T-cell (primary cell): ENCODE measurements at regions of chr6 and their contacts with region 1.

Region 1: GRCh38 chr6:35354361-35355135 is 12.2 kb downstream of the PPARD start:
- DNase-seq: no peak
- ATAC-seq: no peak
- H3K4me3 ChIP-seq: no peak overlapping the region
- H3K4me3 Mint-ChIP-seq: no peak overlapping the region
- H3K27ac ChIP-seq: no peak overlapping the region
- H3K27ac Mint-ChIP-seq: peak overlapping the region in 1 of 2 donors; percentile 34
- H3K4me1 ChIP-seq: peaks cover 0 to 12% of the 10 kb centered on the region in 2 experiments
- H3K4me1 Mint-ChIP-seq: peaks cover 62 to 70% (median 65%) of the 10 kb centered on the region in 3 donors
- H3K27me3 ChIP-seq: no peaks in the 10 kb centered on the region
- H3K27me3 Mint-ChIP-seq: no peaks in the 10 kb centered on the region

Region 2: GRCh38 chr6:35343092-35343834 is 11.3 kb before region 1 on chr6:
- CTCF ChIA-PET with region 1: no interaction called
- POLR2A ChIA-PET with region 1: no interaction called
- DNase-seq: peak in 6 of 35 experiments; percentile 6 to 34 (median 28)
- ATAC-seq: no peak
- H3K4me3 ChIP-seq: peak overlapping the region; percentile 73 to 79
- H3K4me3 Mint-ChIP-seq: peak overlapping the region; percentile 93 to 96 (median 93)
- H3K27ac ChIP-seq: peak overlapping the region; percentile 65
- H3K27ac Mint-ChIP-seq: peak overlapping the region; percentile 91 to 96
- H3K4me1 ChIP-seq: peaks cover 26 to 53% of the 10 kb centered on the region in 2 experiments
- H3K4me1 Mint-ChIP-seq: peaks cover 48 to 56% (median 54%) of the 10 kb centered on the region in 3 donors
- H3K27me3 ChIP-seq: no peaks in the 10 kb centered on the region
- H3K27me3 Mint-ChIP-seq: no peaks in the 10 kb centered on the region

Region 3: DNA sequence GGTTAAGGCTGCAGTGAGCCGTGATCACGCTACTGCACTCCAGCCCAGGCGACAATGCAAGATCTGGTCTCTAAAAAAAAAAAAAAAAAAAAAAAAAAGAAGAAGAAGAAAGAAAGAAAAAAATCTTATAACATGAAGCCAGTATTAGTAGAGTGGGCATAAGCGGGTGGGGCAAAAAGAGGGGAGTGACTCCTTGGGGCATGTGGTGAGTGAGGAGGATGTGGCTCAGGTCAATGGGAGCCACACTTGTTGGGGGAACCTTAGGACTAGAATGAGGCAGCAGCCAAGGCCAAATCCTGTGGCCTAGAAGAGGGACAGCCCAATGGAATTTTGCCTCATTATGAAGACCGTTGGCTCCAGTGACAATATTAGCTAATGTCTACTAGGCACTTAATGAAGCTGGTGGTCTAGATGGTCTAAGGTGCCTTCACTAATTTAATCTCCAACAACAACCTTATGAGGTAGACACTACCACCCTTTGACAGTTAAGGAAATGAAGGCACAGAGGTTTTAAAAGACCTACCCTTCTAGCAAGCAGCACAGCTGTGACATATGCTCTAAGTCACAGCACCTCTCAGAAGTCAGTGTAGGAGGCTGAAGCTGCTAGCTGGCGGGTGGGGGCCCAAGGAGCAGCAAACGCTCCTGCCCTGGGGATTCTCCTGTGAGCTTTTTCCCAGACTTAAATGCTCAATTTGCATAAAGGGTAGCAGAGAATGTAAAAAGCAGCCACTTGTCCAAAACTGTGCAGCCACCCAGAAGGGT is 358.6 kb after region 1 on chr6:
- CTCF ChIA-PET with region 1: no interaction called
- POLR2A ChIA-PET with region 1: interaction called in 1 of 2 experiments, 10 read pairs
- DNase-seq: no peak
- ATAC-seq: peak in 2 of 4 experiments; percentile 27 to 34
- H3K4me3 ChIP-seq: no peak overlapping the region
- H3K4me3 Mint-ChIP-seq: no peak overlapping the region
- H3K27ac ChIP-seq: no peak overlapping the region
- H3K27ac Mint-ChIP-seq: no peak overlapping the region
- H3K4me1 ChIP-seq: peaks cover 7 to 38% of the 10 kb centered on the region in 2 experiments
- H3K4me1 Mint-ChIP-seq: peaks cover 43 to 54% (median 52%) of the 10 kb centered on the region in 3 donors
- H3K27me3 ChIP-seq: peaks cover 0 to 5% of the 10 kb centered on the region in 2 experiments
- H3K27me3 Mint-ChIP-seq: no peaks in the 10 kb centered on the region